Naive thymus-derived CD4-positive, alpha-beta T cell (primary cell): ENCODE measurements at regions of chr5 and their contacts with region 1.

Region 1: DNA sequence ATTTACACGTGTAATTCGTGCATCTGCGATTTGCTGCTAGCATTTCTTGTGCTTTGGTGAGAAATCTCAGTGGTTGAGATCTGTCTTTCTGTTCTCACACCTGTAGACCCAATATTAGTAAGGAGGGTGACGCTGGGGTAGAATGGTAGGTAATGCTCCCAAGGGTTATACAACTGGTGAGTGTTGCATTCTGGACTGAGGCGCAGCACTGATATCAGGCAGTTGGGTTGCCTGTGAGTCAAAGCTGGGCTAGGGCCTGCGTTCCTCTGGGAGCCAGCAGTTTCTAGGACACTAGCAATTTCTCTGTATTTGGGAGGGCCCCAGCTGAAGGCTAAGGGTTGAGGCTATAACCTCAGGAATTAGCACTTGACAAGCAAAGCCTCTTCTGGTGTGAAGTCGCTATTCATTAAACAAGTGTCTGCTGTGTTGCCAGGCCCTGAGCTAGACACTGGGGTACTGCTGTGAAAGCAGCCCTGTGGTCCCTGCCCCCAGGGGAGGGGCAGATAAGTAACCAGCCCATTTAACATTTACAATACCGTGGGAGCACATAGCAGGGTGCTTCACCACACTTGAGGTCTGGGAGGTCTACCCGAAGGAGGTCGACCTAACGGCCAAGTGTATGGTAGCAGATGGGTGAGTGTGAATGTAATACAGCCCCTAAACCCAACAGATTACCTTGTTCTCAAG is 28.7 kb downstream of the LARP1 start:
- DNase-seq: no peak
- ATAC-seq: no peak
- H3K4me3 ChIP-seq: no peak overlapping the region
- H3K4me3 Mint-ChIP-seq: peak overlapping the region in 4 of 10 donors; percentile 38 to 45 (median 42)
- H3K27ac ChIP-seq: peak overlapping the region; percentile 49
- H3K27ac Mint-ChIP-seq: peak overlapping the region in 8 of 9 donors; percentile 37 to 88 (median 76)
- H3K4me1 ChIP-seq: peaks cover 31 to 73% of the 10 kb centered on the region in 2 donors
- H3K4me1 Mint-ChIP-seq: peaks cover 66 to 97% (median 89%) of the 10 kb centered on the region in 7 donors
- H3K27me3 ChIP-seq: no peaks in the 10 kb centered on the region
- H3K27me3 Mint-ChIP-seq: no peaks in the 10 kb centered on the region

Region 2: GRCh38 chr5:154767576-154767975 is 16.3 kb before region 1 on chr5:
- CTCF ChIA-PET with region 1: interaction called, 3 read pairs
- POLR2A ChIA-PET with region 1: no interaction called
- intact Hi-C with region 1: loop called in 1 of 2 experiments (anchors 2 kb)
- DNase-seq: peak in 6 of 9 donors; percentile 21 to 51 (median 42)
- ATAC-seq: peak; percentile 73
- H3K4me3 ChIP-seq: no peak overlapping the region
- H3K4me3 Mint-ChIP-seq: peak overlapping the region; percentile 4 to 82 (median 67)
- H3K27ac ChIP-seq: peak overlapping the region; percentile 25
- H3K27ac Mint-ChIP-seq: peak overlapping the region; percentile 4 to 78 (median 64)
- H3K4me1 ChIP-seq: peaks cover 38 to 77% of the 10 kb centered on the region in 2 donors
- H3K4me1 Mint-ChIP-seq: peaks cover 55 to 86% (median 75%) of the 10 kb centered on the region in 7 donors
- H3K27me3 ChIP-seq: no peaks in the 10 kb centered on the region
- H3K27me3 Mint-ChIP-seq: no peaks in the 10 kb centered on the region

Region 3: GRCh38 chr5:154794525-154795234 is 10.8 kb after region 1 on chr5:
- CTCF ChIA-PET with region 1: no interaction called
- POLR2A ChIA-PET with region 1: no interaction called
- intact Hi-C with region 1: loop called in 1 of 2 experiments (anchors 2 kb)
- DNase-seq: no peak
- ATAC-seq: no peak
- H3K4me3 ChIP-seq: no peak overlapping the region
- H3K4me3 Mint-ChIP-seq: no peak overlapping the region
- H3K27ac ChIP-seq: no peak overlapping the region
- H3K27ac Mint-ChIP-seq: peak overlapping the region in 5 of 9 donors; percentile 1 to 50 (median 8)
- H3K4me1 ChIP-seq: no peaks in the 10 kb centered on the region
- H3K4me1 Mint-ChIP-seq: peaks cover 0 to 12% (median 7%) of the 10 kb centered on the region in 7 donors
- H3K27me3 ChIP-seq: no peaks in the 10 kb centered on the region
- H3K27me3 Mint-ChIP-seq: no peaks in the 10 kb centered on the region